Activated CD8-positive, alpha-beta T cell treated with anti-CD3 and anti-CD28 coated beads for 36 hours (primary cell): ENCODE measurements at regions of chr11 and their contacts with region 1.

Region 1: DNA sequence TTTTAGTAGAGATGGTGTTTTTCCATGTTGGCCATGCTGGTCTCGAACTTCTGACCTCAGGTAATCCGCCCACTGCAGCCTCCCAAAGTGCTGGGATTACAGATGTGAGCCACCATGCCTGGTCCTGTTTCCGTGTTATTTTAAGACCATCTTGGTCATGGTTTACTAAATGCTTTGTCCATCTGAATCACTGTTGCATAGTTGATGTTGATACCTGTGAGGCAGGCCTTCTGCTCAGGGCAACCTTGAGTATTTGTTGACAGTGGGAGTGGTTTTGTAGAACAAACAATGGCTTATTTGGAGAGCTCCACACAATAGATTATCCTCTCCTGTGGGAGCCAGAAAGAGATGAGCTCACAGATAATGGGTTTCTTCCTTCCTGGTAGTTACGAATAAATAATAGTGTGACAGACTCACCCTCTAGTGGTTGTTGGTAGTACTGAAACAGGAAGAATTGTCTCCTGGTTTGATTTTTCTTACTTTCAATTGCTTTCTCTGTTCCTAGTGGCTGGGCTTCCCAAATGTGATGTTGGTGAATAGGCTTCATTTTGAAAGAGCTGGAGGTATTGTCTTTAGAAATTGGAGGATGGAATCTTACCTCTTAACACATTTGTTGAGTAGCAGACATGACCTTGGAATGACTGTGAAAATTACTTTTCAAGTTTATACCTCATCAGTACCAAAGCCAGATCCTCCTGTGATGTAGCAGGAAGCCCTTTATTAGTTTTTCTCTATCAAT is 39.0 kb downstream of the CTNND1 start:
- DNase-seq: peak; percentile 6
- ATAC-seq: peak; percentile 96
- H3K4me3 Mint-ChIP-seq: no peak overlapping the region
- H3K27ac Mint-ChIP-seq: peak overlapping the region; percentile 63
- H3K4me1 Mint-ChIP-seq: peaks cover 21% of the 10 kb centered on the region
- H3K27me3 Mint-ChIP-seq: no peaks in the 10 kb centered on the region
- CTCF ChIP-seq: peak; percentile 92

Region 2: DNA sequence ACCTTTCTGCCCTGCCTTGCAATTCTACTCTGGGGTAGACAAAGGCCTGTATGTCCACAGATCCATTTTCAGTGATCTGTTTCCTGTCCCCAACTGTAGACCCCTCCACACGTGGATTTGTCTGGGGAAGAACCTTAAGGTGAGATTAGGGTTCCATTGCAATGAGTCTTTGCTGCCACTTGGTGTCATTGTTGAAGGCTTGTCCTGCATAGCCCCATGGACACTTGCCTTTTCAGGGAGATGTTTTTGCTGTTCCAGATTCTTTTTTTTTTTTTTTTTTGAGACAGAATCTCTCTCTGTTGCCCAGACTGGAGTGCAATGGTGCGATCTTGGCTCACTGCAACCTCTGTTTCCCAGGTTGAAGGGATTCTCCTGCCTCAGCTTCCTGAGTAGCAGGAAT is 181.3 kb before region 1 on chr11:
- CTCF ChIA-PET with region 1: no interaction called
- POLR2A ChIA-PET with region 1: no interaction called
- intact Hi-C with region 1: no loop called
- DNase-seq: no peak
- ATAC-seq: no peak
- H3K4me3 Mint-ChIP-seq: no peak overlapping the region
- H3K27ac Mint-ChIP-seq: no peak overlapping the region
- H3K4me1 Mint-ChIP-seq: no peaks in the 10 kb centered on the region
- H3K27me3 Mint-ChIP-seq: no peaks in the 10 kb centered on the region
- CTCF ChIP-seq: no peak

Region 3: DNA sequence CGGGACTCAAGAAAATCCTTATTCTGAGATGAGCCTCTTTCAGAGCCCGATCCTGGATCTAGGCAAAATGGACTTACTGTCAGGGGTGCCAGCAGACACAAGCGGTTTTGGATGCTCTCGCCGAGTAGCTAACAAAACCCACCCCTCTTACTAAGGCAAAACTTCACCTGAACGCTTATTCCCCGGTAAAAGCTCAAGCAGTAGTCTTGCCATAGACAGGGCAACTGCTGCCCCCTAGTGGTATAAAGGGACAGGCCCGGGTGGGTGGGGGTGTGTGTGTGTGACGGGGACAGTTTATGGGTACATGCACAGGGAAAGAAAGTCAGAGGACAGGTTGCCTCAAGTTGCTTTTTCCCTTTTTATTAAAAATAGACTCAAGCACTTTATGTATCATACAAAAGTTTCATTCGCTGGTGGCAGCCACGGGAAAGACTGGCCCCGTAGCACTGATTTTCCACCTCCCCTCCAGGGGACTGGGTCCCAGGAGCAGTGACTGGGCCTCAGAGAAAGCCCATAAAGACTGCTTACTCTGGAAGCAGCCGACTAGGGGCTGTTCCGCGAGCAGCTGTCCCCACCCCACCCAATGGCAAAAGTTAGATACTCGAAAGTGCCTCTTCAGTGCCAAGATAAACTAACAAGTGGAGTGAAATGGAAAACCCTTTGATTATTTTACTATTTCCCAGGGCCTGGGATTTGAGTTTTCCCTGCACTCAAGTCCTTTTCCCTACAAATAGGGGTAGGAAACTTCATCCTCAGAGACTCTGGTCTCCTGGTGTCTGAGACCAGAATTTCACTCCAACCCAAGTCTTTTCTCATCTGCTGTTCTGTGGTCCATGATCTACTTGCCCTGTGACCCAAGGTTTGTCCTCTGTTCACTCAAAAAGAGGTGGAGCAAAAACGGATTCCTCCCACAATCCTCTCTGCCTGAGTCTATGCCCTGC is 155.6 kb before region 1 on chr11:
- CTCF ChIA-PET with region 1: interaction called, 11 read pairs
- POLR2A ChIA-PET with region 1: no interaction called
- intact Hi-C with region 1: no loop called
- DNase-seq: peak; percentile 93
- ATAC-seq: peak; percentile 71
- H3K4me3 Mint-ChIP-seq: no peak overlapping the region
- H3K27ac Mint-ChIP-seq: no peak overlapping the region
- H3K4me1 Mint-ChIP-seq: peaks cover 36% of the 10 kb centered on the region
- H3K27me3 Mint-ChIP-seq: peaks cover 48% of the 10 kb centered on the region
- CTCF ChIP-seq: peak; percentile 78

Region 4: GRCh38 chr11:57675176-57675941 is 125.3 kb before region 1 on chr11:
- CTCF ChIA-PET with region 1: interaction called, 11 read pairs
- POLR2A ChIA-PET with region 1: no interaction called
- intact Hi-C with region 1: no loop called
- DNase-seq: no peak
- ATAC-seq: no peak
- H3K4me3 Mint-ChIP-seq: no peak overlapping the region
- H3K27ac Mint-ChIP-seq: no peak overlapping the region
- H3K4me1 Mint-ChIP-seq: peaks cover 71% of the 10 kb centered on the region
- H3K27me3 Mint-ChIP-seq: no peaks in the 10 kb centered on the region
- CTCF ChIP-seq: no peak

Region 5: GRCh38 chr11:57741132-57742086 is 59.2 kb before region 1 on chr11 and contains the start of gene SELENOH:
- CTCF ChIA-PET with region 1: interaction called, 142 read pairs
- POLR2A ChIA-PET with region 1: interaction called, 15 read pairs
- intact Hi-C with region 1: no loop called
- DNase-seq: peak; percentile 99
- ATAC-seq: peak; percentile 95
- H3K4me3 Mint-ChIP-seq: peak within 1 kb of the TSS; percentile 97
- H3K27ac Mint-ChIP-seq: peak within 1 kb of the TSS; percentile 97
- H3K4me1 Mint-ChIP-seq: peaks cover 36% of the 10 kb centered on the region
- H3K27me3 Mint-ChIP-seq: no peaks in the 10 kb centered on the region
- CTCF ChIP-seq: no peak
- total RNA-seq, gene SELENOH: 257 to 265 TPM

Region 6: GRCh38 chr11:57761301-57762234 is 39.0 kb before region 1 on chr11 and contains the start of gene CTNND1:
- CTCF ChIA-PET with region 1: interaction called, 57 read pairs
- POLR2A ChIA-PET with region 1: no interaction called
- intact Hi-C with region 1: no loop called
- DNase-seq: peak; percentile 22
- ATAC-seq: peak; percentile 79
- H3K4me3 Mint-ChIP-seq: peak within 1 kb of the TSS; percentile 75
- H3K27ac Mint-ChIP-seq: peak within 1 kb of the TSS; percentile 5
- H3K4me1 Mint-ChIP-seq: peaks cover 14% of the 10 kb centered on the region
- H3K27me3 Mint-ChIP-seq: no peaks in the 10 kb centered on the region
- CTCF ChIP-seq: no peak
- total RNA-seq, gene CTNND1: 7.3 to 7.9 TPM

Region 7: GRCh38 chr11:57785072-57785471 is 15.5 kb before region 1 on chr11:
- CTCF ChIA-PET with region 1: interaction called, 43 read pairs
- POLR2A ChIA-PET with region 1: no interaction called
- intact Hi-C with region 1: no loop called
- DNase-seq: no peak
- ATAC-seq: no peak
- H3K4me3 Mint-ChIP-seq: no peak overlapping the region
- H3K27ac Mint-ChIP-seq: no peak overlapping the region
- H3K4me1 Mint-ChIP-seq: peaks cover 17% of the 10 kb centered on the region
- H3K27me3 Mint-ChIP-seq: no peaks in the 10 kb centered on the region
- CTCF ChIP-seq: no peak

Region 8: GRCh38 chr11:58127342-58127741 is 326.7 kb after region 1 on chr11:
- CTCF ChIA-PET with region 1: no interaction called
- POLR2A ChIA-PET with region 1: no interaction called
- intact Hi-C with region 1: no loop called
- DNase-seq: no peak
- ATAC-seq: no peak
- H3K4me3 Mint-ChIP-seq: no peak overlapping the region
- H3K27ac Mint-ChIP-seq: no peak overlapping the region
- H3K4me1 Mint-ChIP-seq: no peaks in the 10 kb centered on the region
- H3K27me3 Mint-ChIP-seq: peaks cover 7% of the 10 kb centered on the region
- CTCF ChIP-seq: no peak